Naive thymus-derived CD4-positive, alpha-beta T cell (primary cell): ENCODE measurements at regions of chr1 and their contacts with region 1.

Region 1: DNA sequence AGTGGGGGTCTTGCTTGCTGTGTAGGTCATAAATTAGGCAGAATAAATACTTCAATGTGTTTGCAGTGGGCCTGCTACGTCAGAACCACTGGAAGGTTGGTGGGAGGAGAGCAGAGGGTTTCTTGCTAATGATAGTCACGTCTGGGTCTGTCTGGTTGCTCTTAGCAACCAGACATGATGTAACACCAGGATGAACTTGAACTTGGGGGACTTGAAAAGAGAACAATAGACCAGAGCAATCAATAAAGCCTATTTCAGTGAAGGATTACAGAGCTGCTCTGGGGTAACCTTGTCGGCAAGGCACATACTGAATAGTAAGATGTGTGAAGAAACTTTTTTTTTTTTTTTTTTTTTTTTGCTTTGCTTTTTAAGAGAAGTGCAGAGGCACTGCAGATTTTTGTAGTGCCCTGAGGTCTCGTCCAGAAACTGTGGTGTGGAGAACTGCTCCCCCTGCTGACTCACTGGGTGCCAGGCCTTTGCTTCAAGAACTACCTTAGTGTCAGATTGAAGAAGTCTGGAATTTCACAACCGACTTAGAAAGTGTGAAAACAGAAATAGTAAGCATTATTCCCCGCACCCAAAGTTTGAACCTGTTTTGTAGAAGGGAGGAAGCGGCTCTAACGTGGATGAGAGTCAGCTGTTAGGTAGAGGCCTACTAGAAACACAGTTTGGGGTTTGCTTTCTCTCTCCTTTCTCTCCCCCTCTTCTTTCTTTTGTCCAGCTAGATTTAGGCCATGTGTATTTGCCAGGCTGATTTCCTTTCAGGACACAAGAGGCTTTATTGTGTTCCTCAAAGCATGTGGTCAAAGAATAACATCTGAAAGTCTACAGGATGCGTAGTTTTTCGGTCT is 271.6 kb downstream of the TM2D1 start:
- DNase-seq: peak; percentile 29 to 69 (median 59)
- ATAC-seq: peak; percentile 88
- H3K4me3 ChIP-seq: no peak overlapping the region
- H3K4me3 Mint-ChIP-seq: peak overlapping the region in 3 of 10 donors; percentile 14 to 39 (median 26)
- H3K27ac ChIP-seq: no peak overlapping the region
- H3K27ac Mint-ChIP-seq: peak overlapping the region in 6 of 9 donors; percentile 11 to 82 (median 44)
- H3K4me1 ChIP-seq: peaks cover 0 to 5% of the 10 kb centered on the region in 2 donors
- H3K4me1 Mint-ChIP-seq: peaks cover 0 to 13% (median 8%) of the 10 kb centered on the region in 7 donors
- H3K27me3 ChIP-seq: no peaks in the 10 kb centered on the region
- H3K27me3 Mint-ChIP-seq: peaks cover 0 to 2% (median 0%) of the 10 kb centered on the region in 5 donors

Region 2: DNA sequence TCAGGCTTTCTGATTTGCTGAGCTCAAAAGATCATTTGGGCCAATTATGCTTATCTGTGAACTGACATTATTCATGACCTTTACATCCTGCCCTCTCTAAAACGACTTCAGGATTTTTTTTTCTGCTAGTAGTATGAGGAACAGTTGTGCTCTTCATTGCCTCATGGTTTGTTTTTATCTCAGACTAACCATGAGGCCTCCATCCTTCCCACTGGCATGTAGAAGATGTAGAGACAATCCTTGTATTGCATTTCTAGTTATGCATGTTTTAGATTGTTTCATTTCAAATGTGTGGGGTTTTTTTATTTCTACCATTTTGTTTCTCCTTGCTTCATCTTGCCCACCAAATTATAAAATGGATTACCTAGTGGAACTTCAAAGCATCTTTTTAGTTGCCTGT is 1297.0 kb before region 1 on chr1:
- CTCF ChIA-PET with region 1: no interaction called
- POLR2A ChIA-PET with region 1: no interaction called
- intact Hi-C with region 1: loop called in 1 of 2 experiments (anchors 5 kb)
- DNase-seq: no peak
- ATAC-seq: no peak
- H3K4me3 ChIP-seq: no peak overlapping the region
- H3K4me3 Mint-ChIP-seq: no peak overlapping the region
- H3K27ac ChIP-seq: no peak overlapping the region
- H3K27ac Mint-ChIP-seq: no peak overlapping the region
- H3K4me1 ChIP-seq: no peaks in the 10 kb centered on the region
- H3K4me1 Mint-ChIP-seq: no peaks in the 10 kb centered on the region
- H3K27me3 ChIP-seq: no peaks in the 10 kb centered on the region
- H3K27me3 Mint-ChIP-seq: peaks cover 0 to 7% (median 4%) of the 10 kb centered on the region in 5 donors

Region 3: DNA sequence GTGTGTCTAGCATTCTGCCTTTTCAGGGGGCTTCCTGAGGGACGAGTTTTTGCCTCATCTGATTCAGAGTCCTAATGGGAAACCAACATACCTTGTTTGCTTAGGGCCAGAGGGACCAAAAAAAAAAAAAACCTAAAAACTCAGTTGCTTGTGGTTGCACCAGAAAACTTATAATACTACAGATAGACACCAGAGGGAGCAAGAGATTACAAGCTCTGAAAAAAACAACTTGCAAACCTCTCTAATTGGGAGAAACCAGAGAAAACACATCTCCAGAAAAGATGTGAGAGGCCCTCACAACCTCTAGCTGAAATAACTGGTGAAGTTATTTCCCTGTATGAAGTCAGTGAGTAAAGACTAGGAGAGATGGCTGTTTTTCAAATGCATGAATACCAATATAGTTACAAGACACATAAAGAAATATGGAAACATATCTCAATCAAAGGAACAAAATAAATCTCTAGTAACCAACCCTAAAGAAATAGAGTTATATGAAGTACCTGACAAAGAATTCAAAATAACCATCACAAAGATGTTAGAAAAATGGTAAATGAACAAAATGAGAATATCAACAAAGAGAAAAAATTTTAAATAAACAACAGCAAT is 604.6 kb before region 1 on chr1:
- CTCF ChIA-PET with region 1: no interaction called
- POLR2A ChIA-PET with region 1: no interaction called
- intact Hi-C with region 1: loop called (anchors 1 to 2 kb)
- DNase-seq: no peak
- ATAC-seq: no peak
- H3K4me3 ChIP-seq: no peak overlapping the region
- H3K4me3 Mint-ChIP-seq: no peak overlapping the region
- H3K27ac ChIP-seq: no peak overlapping the region
- H3K27ac Mint-ChIP-seq: no peak overlapping the region
- H3K4me1 ChIP-seq: no peaks in the 10 kb centered on the region
- H3K4me1 Mint-ChIP-seq: no peaks in the 10 kb centered on the region
- H3K27me3 ChIP-seq: no peaks in the 10 kb centered on the region
- H3K27me3 Mint-ChIP-seq: peaks cover 6 to 32% (median 28%) of the 10 kb centered on the region in 5 donors

Region 4: GRCh38 chr1:60978421-60979357 is 474.6 kb before region 1 on chr1:
- CTCF ChIA-PET with region 1: interaction called, 4 read pairs
- POLR2A ChIA-PET with region 1: no interaction called
- intact Hi-C with region 1: loop called (anchors 1 kb)
- DNase-seq: peak in 6 of 9 donors; percentile 9 to 45 (median 28)
- ATAC-seq: peak; percentile 53
- H3K4me3 ChIP-seq: no peak overlapping the region
- H3K4me3 Mint-ChIP-seq: no peak overlapping the region
- H3K27ac ChIP-seq: no peak overlapping the region
- H3K27ac Mint-ChIP-seq: no peak overlapping the region
- H3K4me1 ChIP-seq: no peaks in the 10 kb centered on the region
- H3K4me1 Mint-ChIP-seq: peaks cover 0 to under 1% (median 0%) of the 10 kb centered on the region in 7 donors
- H3K27me3 ChIP-seq: peaks cover 0 to 3% of the 10 kb centered on the region in 2 donors
- H3K27me3 Mint-ChIP-seq: peaks cover 0 to 9% (median 1%) of the 10 kb centered on the region in 5 donors

Region 5: DNA sequence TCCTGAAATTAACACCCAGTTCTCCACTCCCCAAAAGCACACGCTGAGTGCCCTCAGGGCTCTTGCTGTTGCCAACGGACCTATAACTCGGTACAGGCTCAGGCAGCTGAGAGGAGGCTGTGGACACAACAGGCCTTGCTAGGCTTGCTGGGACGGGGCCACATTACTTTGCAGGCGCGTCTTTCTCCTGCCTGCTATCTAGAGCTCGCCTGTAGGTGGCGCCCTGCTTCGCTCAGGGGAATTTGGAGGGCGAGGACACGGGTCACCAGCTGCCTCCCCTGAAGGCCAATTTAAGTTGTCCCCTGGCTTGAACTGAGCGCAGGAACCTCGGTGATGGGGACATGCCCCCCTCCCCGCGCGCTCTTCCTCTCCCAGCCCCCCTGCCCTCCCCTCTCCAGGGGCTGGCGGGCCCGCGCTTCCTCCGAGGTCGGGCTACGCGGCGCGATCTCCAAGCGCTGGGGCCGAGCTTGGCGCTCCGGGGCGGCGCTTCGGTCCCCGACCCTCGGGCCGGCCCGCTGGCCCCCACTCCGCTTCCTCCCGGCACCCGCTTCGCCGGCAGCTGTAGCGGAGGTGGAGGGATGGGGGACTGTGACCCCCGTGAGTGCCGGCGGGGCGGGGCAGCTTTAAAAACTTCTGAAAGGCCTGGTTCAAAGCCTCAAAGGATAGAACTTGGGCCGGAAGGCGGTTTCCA is 403.3 kb before region 1 on chr1:
- CTCF ChIA-PET with region 1: interaction called, 21 read pairs
- POLR2A ChIA-PET with region 1: no interaction called
- intact Hi-C with region 1: loop called (anchors 1 kb)
- DNase-seq: peak; percentile 69 to 93 (median 84)
- ATAC-seq: peak; percentile 95
- H3K4me3 ChIP-seq: peak overlapping the region; percentile 64
- H3K4me3 Mint-ChIP-seq: peak overlapping the region; percentile 69 to 88 (median 80)
- H3K27ac ChIP-seq: no peak overlapping the region
- H3K27ac Mint-ChIP-seq: peak overlapping the region in 1 of 9 donors; percentile 38
- H3K4me1 ChIP-seq: peaks cover 10 to 15% of the 10 kb centered on the region in 2 donors
- H3K4me1 Mint-ChIP-seq: peaks cover 17 to 37% (median 26%) of the 10 kb centered on the region in 7 donors
- H3K27me3 ChIP-seq: peaks cover 4 to 6% of the 10 kb centered on the region in 2 donors
- H3K27me3 Mint-ChIP-seq: peaks cover 39 to 61% (median 45%) of the 10 kb centered on the region in 5 donors

Region 6: DNA sequence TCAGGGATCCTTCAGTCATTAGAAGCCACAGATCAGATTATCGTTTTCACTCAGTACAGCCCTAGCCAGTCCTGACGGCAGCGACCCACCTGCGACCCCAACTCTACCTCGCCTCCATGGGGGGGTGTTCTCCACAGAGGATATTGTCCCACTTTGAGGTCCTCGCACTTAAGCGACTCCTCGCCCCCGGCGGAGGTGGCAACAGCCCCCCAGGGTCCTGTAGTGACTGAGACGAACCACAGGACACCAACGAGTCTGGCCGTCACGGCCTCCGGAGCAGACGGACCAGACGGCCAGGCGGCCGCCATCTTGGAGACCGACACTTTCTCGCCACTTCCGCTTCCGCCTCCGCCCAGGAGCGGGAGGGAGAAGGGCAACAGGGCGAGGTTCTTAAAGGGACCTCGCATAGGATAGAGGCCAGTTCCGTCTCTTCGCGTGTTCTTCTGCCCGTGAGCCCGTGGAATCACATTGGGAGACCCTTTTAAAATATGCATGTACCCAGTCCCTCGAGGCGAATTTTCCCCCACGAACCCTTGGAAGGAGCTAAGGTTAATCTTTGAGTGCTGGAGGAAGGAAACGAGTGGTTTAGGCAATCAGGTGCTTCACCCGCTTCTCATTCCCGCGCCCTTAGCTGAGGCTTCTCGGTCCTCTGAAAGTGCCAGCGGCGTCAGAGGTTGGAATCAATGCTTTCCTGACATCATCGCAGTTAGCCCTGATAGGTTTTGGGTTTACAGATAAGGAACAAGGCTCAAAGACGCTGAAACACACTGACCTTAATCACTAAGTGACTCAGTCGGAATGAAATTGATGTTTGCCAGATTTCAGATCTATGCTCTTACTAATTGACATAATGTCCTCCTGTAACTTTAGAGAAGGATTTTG is 271.7 kb after region 1 on chr1 and contains the start of gene TM2D1:
- CTCF ChIA-PET with region 1: no interaction called
- POLR2A ChIA-PET with region 1: no interaction called
- intact Hi-C with region 1: no loop called
- DNase-seq: peak; percentile 72 to 89 (median 81)
- ATAC-seq: peak; percentile 98
- H3K4me3 ChIP-seq: peak within 1 kb of the TSS; percentile 96
- H3K4me3 Mint-ChIP-seq: peak within 1 kb of the TSS; percentile 86 to 99 (median 96)
- H3K27ac ChIP-seq: peak within 1 kb of the TSS; percentile 92
- H3K27ac Mint-ChIP-seq: peak within 1 kb of the TSS; percentile 94 to 99 (median 97)
- H3K4me1 ChIP-seq: peaks cover 13 to 17% of the 10 kb centered on the region in 2 donors
- H3K4me1 Mint-ChIP-seq: peaks cover 16 to 44% (median 39%) of the 10 kb centered on the region in 7 donors
- H3K27me3 ChIP-seq: no peaks in the 10 kb centered on the region
- H3K27me3 Mint-ChIP-seq: no peaks in the 10 kb centered on the region
- total RNA-seq, gene TM2D1: 26.8 to 57.6 (median 41.1) TPM